ENCODE measurements at regions of chr3 and their contacts with region 1.

Region 1: DNA sequence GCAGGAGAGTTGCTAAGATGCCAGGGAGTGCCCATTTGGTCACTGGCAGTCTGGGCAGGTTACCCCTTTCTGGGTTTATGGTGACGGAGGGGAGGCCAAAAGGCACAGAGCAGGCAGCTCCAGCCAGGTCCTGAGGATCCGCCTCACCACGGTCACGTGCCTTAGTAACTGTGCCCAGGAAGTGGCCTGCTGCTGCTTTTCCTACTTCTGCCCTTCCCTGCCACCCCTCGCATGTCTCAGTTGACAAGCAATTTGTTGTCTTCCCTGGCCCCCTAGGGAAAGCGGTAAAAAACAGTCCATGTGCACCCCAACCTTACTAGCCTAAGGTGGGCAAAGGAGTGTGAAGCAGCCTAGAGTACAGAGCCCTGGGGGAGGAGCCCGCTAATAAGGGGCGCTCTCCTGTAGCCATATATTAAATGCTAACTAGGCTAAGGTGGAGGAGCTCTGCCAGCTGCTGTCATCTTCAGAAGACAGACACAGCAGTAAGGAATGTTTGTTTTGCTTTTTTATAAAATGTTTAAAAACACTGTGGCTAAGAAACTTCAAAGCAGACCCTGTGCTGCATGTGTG is 9.1 kb upstream of the LIPH start:
- DNase-seq: no peak
- H3K4me3 ChIP-seq: no peak overlapping the region
- CTCF ChIP-seq: no peak

Region 2: GRCh38 chr3:185242605-185243004 is 318.9 kb before region 1 on chr3:
- CTCF ChIA-PET with region 1: no interaction called
- POLR2A ChIA-PET with region 1: no interaction called
- DNase-seq: no peak
- H3K4me3 ChIP-seq: no peak overlapping the region
- CTCF ChIP-seq: no peak

Region 3: GRCh38 chr3:185549111-185549510 is 12.3 kb before region 1 on chr3:
- CTCF ChIA-PET with region 1: interaction called, 30 read pairs
- POLR2A ChIA-PET with region 1: no interaction called
- DNase-seq: peak; percentile 95
- H3K4me3 ChIP-seq: no peak overlapping the region
- CTCF ChIP-seq: no peak

Region 4: DNA sequence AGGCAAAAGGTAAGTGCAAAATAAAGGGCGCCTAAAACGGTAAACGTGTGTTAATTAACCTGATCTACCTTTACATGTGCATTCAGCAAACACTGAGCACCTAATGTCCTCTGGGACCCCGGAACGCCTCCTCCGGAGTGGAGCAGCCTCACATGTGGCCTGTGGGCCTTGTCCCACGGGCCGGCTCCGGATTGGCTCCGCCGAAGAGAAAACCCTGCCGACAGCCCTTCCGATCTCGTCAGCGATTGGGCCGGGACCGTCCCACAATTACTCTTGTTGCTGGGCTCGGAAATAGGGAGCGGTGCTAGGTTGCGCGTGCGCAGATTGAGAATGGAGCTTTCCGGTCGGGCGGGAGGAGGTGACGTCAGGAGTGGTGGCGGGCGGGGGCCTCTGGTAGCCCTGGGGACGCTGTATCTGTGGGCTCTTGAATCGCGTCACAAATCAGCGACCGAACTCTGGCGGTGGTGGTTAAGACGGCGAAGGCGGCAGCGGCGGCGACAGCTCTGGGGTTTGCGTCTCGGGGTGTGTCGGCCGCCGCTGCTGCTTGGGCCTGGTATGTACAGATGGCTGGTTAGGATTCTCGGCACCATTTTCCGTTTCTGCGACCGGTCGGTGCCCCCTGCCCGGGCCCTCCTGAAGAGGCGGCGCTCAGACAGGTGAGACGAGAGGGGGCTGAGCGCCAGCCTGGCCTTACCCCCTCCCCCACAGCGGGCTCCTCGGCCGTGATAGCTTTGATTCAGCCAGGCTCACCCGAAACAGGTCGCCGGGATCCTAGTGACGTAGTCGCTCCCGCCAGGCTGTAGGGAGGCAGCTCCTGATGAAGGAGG is 24.6 kb after region 1 on chr3 and contains the start of gene SENP2:
- CTCF ChIA-PET with region 1: interaction called, 24 read pairs
- POLR2A ChIA-PET with region 1: no interaction called
- DNase-seq: peak; percentile 87
- H3K4me3 ChIP-seq: peak within 1 kb of the TSS; percentile 94
- CTCF ChIP-seq: no peak

Region 5: GRCh38 chr3:185605566-185605965 is 44.1 kb after region 1 on chr3:
- CTCF ChIA-PET with region 1: no interaction called
- POLR2A ChIA-PET with region 1: no interaction called
- DNase-seq: no peak
- H3K4me3 ChIP-seq: no peak overlapping the region
- CTCF ChIP-seq: no peak

Region 6: GRCh38 chr3:185865247-185865646 is 303.8 kb after region 1 on chr3:
- CTCF ChIA-PET with region 1: no interaction called
- POLR2A ChIA-PET with region 1: no interaction called
- DNase-seq: no peak
- H3K4me3 ChIP-seq: no peak overlapping the region
- CTCF ChIP-seq: no peak